ENCODE measurements at regions of chr19 and their contacts with region 1.

Region 1: DNA sequence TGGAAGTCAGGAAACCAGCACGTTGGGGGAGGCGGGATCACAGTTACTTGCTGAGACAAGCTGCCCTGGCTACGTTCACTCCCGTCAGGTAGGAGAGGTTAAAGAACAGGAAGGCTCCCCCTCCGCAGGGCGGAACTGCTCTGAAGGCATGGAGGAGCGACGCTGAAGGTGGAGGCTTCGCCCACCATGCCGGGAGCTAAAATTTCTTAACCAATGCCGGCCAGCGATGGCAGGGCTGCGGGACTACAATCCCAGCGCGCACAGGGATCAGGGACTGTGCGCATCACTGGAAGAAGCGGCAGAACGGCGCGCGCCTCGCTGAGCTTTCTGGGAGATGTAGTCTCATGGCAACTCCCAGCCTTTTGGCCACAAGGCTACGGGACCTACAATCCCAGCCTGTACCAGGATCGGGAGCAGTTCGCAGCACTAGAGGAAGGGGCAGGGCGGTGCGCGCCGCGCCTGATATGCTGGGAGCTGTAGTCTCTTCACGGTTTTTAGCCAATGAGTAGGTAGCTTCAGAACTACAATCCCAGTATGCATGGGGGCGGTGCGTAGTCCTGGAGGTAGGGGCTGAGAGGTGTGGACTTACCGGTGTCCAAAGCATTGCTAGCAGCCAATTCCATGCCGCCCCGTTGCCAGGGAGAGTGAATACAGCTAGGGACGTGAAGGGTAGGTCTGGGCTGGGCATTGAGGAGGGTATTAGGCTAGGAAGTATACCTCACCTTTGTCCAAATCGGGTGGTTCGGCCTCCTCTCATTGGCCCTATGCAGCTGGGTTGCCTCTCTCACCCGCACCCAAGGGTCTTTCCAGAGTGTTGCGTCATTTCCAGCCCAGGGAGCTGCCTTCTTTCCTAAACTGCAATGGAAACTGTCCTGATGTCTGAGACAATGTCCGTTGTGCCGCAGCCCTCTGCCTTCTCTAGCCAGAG is 12.8 kb upstream of the ZNF682 start:
- DNase-seq: peak; percentile 93 to 95
- ATAC-seq: peak; percentile 99 to 100 (median 100)
- H3K4me3 ChIP-seq: peak overlapping the region; percentile 56 to 84 (median 72)
- H3K27ac ChIP-seq: peak overlapping the region in 9 of 10 donors; percentile 67 to 90 (median 82)
- H3K4me1 ChIP-seq: peaks cover 0 to 12% (median 6%) of the 10 kb centered on the region in 9 donors
- H3K27me3 ChIP-seq: no peaks in the 10 kb centered on the region
- CTCF ChIP-seq: peak in 4 of 9 donors; percentile 10 to 27 (median 22)

Region 2: GRCh38 chr19:20039203-20039723 is 12.8 kb before region 1 on chr19 and contains the start of gene ZNF682:
- intact Hi-C with region 1: loop called in 1 of 10 experiments (anchors 1 kb)
- DNase-seq: peak; percentile 93 to 96
- ATAC-seq: peak; percentile 99 to 100 (median 100)
- H3K4me3 ChIP-seq: peak within 1 kb of the TSS; percentile 56 to 96 (median 85)
- H3K27ac ChIP-seq: peak within 1 kb of the TSS in 9 of 10 donors; percentile 56 to 84 (median 78)
- H3K4me1 ChIP-seq: peaks cover 0 to 32% (median 8%) of the 10 kb centered on the region in 9 donors
- H3K27me3 ChIP-seq: no peaks in the 10 kb centered on the region
- CTCF ChIP-seq: no peak
- total RNA-seq, gene ZNF682: 1.9 to 8.8 (median 4.8) TPM

Region 3: DNA sequence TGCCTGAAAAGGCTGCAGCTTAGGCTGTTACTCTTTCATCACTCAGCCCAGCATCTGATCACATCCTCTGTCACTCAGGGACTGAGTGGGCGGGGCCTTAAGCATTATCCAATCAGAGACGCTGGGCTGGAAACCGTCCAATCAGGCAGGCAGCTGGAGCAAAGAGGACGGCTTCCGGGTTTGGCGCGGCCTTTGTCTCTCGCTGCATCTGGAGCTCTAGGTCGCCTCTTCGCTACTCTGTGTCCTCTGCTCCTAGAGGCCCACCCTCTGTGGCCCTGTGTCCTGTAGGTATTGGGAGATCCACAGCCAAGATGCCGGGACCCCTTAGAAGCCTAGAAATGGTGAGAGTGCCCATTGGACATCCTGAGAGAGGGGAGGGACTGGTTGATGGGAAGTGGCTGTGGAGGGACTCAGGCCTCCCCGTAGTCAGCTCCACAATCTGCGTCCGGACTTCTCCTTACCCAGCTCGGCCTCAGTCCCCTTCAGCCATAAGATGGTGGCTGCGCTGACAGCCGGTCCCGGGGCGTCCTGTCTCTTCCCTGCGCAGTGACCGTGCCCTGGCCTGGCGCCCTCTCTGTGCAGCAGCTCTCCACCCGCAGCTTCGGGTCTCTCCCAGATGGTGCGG is 115.0 kb after region 1 on chr19 and contains the start of gene ZNF486:
- intact Hi-C with region 1: loop called in 2 of 10 experiments (anchors 10 kb)
- DNase-seq: peak; percentile 94 to 97
- ATAC-seq: peak; percentile 97 to 99 (median 98)
- H3K4me3 ChIP-seq: peak within 1 kb of the TSS; percentile 61 to 87 (median 76)
- H3K27ac ChIP-seq: peak within 1 kb of the TSS in 9 of 10 donors; percentile 54 to 87 (median 71)
- H3K4me1 ChIP-seq: peaks cover 0 to 17% (median 9%) of the 10 kb centered on the region in 9 donors
- H3K27me3 ChIP-seq: no peaks in the 10 kb centered on the region
- CTCF ChIP-seq: no peak
- total RNA-seq, gene ZNF486: 1.0 to 2.6 (median 2.3) TPM

Region 4: DNA sequence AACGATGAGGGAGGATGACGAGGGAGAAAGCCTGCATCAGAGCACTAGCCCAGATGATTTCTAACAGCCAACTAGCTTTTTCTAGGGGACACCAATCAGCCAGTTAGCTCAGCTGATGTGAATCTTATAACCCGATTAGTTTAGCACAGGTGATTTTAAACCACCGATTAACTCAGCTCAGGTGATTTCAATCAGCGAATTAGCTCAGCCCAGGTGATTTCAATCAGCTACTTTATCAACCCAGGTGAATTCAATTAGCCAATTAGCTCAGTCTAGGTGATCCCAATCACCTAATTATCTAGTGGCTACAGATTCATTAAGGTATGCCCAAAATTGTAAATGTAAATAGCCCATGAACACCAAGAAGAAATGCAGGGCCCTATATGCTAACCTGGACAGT is 261.8 kb after region 1 on chr19:
- intact Hi-C with region 1: no loop called
- DNase-seq: no peak
- ATAC-seq: no peak
- H3K4me3 ChIP-seq: no peak overlapping the region
- H3K27ac ChIP-seq: no peak overlapping the region
- H3K4me1 ChIP-seq: no peaks in the 10 kb centered on the region
- H3K27me3 ChIP-seq: no peaks in the 10 kb centered on the region
- CTCF ChIP-seq: no peak

Region 5: GRCh38 chr19:20776083-20777076 is 724.3 kb after region 1 on chr19 and contains the start of gene ZNF66:
- intact Hi-C with region 1: loop called in 1 of 10 experiments (anchors 5 kb)
- DNase-seq: peak; percentile 95 to 98
- ATAC-seq: peak; percentile 99 to 100 (median 100)
- H3K4me3 ChIP-seq: peak within 1 kb of the TSS; percentile 52 to 92 (median 78)
- H3K27ac ChIP-seq: peak within 1 kb of the TSS in 9 of 10 donors; percentile 17 to 77 (median 44)
- H3K4me1 ChIP-seq: peaks cover 0 to 16% (median 6%) of the 10 kb centered on the region in 9 donors
- H3K27me3 ChIP-seq: no peaks in the 10 kb centered on the region
- CTCF ChIP-seq: no peak
- total RNA-seq, gene ZNF66: 0.49 to 1.9 (median 1.0) TPM

Measured in heart right ventricle (tissue), 16 donors.